IMR-90 (cell line): ENCODE measurements at regions of chr7 and their contacts with region 1.

Region 1: DNA sequence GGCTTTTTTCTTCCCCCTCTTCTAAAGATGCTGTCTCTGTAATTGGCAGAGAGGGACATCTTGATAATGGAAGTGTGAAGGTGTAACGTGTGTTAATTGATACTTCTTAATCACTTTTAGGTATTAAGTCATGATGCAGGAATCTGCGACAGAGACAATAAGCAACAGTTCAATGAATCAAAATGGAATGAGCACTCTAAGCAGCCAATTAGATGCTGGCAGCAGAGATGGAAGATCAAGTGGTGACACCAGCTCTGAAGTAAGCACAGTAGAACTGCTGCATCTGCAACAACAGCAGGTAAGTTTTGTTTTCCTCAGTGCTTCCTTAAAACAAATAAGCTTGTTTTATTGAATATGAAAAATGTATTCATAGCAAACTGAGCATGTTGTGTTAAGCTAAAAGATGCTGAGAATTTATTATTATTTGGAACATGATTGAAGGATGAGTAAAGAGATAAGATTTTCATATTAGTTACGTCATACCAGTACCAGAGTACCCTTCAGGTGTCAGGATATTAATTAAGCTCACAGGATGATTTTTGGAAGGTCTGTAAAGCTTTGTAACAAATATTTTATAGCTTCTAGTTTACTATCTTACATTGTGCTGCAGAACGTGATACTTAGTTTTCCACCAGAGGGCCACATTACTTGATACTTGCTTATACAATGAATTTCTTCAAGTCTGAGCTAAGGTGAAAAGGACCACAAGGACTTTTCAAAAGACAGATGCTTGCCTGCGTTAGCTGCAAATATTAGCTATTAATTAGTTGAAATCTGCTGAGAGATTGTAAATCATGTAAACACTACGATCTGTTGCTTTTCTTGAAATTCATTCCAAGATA is 12.0 kb downstream of the FOXP2 start:
- DNase-seq: peak; percentile 36
- ATAC-seq: peak; percentile 53; the same call in 1 of the 2 replicates
- H3K4me3 ChIP-seq: no peak overlapping the region
- H3K27ac ChIP-seq: no peak overlapping the region
- H3K4me1 ChIP-seq: no peaks in the 10 kb centered on the region
- H3K27me3 ChIP-seq: no peaks in the 10 kb centered on the region
- CTCF ChIP-seq: peak; percentile 43
- POLR2A ChIP-seq: no peak
- RAD21 ChIP-seq: peak; percentile 35; the same call in 1 of the 2 replicates

Region 2: DNA sequence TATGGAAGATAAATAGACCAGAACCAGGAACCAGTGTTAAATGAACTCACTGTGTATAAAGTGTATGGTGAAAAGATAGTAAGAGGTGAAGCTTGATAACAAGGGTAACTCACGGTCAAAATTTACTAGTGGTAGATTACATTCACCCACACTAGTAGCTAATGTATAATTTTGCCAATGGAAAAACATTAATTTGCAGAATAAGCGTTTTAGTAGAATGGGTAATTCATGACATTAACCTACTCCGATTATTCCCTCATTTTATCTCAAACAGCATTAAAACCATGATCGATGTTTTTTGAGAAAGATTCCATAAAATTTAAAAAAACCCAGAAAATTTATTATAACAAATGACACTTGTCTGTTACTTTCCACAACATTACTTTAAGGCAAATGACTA is 450.1 kb before region 1 on chr7:
- CTCF ChIA-PET with region 1: no interaction called
- POLR2A ChIA-PET with region 1: no interaction called
- dilution Hi-C with region 1: no loop called
- in situ Hi-C with region 1: no loop called
- intact Hi-C with region 1: no loop called
- DNase-seq: no peak
- ATAC-seq: no peak
- H3K4me3 ChIP-seq: no peak overlapping the region
- H3K27ac ChIP-seq: no peak overlapping the region
- H3K4me1 ChIP-seq: no peaks in the 10 kb centered on the region
- H3K27me3 ChIP-seq: no peaks in the 10 kb centered on the region
- CTCF ChIP-seq: no peak
- POLR2A ChIP-seq: no peak
- RAD21 ChIP-seq: no peak

Region 3: DNA sequence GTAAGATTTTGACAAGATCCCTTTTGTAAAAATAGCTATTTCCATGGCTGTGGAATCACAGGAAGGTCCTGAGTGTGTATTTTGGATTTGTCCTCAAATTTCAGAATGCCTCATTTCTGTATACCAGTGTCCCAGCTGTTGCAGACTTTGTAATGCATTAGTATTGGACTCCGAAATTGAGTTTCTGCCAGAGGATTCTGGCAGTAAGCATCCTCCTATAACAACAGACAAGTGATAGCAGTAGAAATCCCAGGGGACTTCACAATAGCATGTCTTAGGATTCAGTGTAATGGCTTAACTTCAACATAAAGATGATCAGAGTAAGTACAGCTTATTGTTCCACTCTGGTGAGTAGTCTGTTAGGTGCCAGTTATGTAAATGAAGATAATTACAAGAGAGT is 92.6 kb after region 1 on chr7:
- CTCF ChIA-PET with region 1: no interaction called
- POLR2A ChIA-PET with region 1: no interaction called
- dilution Hi-C with region 1: no loop called
- in situ Hi-C with region 1: no loop called
- intact Hi-C with region 1: no loop called
- DNase-seq: no peak
- ATAC-seq: no peak
- H3K4me3 ChIP-seq: no peak overlapping the region
- H3K27ac ChIP-seq: no peak overlapping the region
- H3K4me1 ChIP-seq: no peaks in the 10 kb centered on the region
- H3K27me3 ChIP-seq: no peaks in the 10 kb centered on the region
- CTCF ChIP-seq: no peak
- POLR2A ChIP-seq: no peak
- RAD21 ChIP-seq: no peak

Region 4: DNA sequence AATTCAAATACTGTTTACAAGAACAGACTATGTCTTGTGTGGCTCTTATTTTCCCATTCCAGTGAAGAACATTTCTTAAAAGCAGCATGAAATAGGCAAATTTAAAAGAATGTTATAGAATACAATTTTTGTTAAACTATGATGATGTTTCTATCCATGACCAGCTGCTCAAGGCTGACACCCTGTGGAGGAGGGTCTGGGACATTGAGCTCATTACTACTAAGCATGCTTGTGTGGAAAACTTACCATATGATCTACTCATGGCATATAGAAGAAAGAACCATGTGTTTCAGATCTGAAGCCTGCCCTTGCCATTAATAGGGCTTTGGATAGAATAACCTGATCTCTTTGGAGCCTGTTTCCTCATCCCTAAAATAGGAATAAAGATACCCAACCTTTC is 113.0 kb after region 1 on chr7:
- CTCF ChIA-PET with region 1: interaction called, 16 read pairs
- POLR2A ChIA-PET with region 1: no interaction called
- dilution Hi-C with region 1: no loop called
- in situ Hi-C with region 1: no loop called
- intact Hi-C with region 1: loop called (anchors 5 kb)
- DNase-seq: peak; percentile 35
- ATAC-seq: peak; percentile 72
- H3K4me3 ChIP-seq: no peak overlapping the region
- H3K27ac ChIP-seq: no peak overlapping the region
- H3K4me1 ChIP-seq: no peaks in the 10 kb centered on the region
- H3K27me3 ChIP-seq: no peaks in the 10 kb centered on the region
- CTCF ChIP-seq: peak; percentile 51
- POLR2A ChIP-seq: no peak
- RAD21 ChIP-seq: peak; percentile 44

Region 5: GRCh38 chr7:114663502-114663901 is 236.9 kb after region 1 on chr7:
- CTCF ChIA-PET with region 1: interaction called, 5 read pairs
- POLR2A ChIA-PET with region 1: no interaction called
- dilution Hi-C with region 1: no loop called
- in situ Hi-C with region 1: no loop called
- intact Hi-C with region 1: loop called (anchors 1 kb)
- DNase-seq: peak; percentile 34
- ATAC-seq: no peak
- H3K4me3 ChIP-seq: no peak overlapping the region
- H3K27ac ChIP-seq: no peak overlapping the region
- H3K4me1 ChIP-seq: no peaks in the 10 kb centered on the region
- H3K27me3 ChIP-seq: no peaks in the 10 kb centered on the region
- CTCF ChIP-seq: peak; percentile 37
- POLR2A ChIP-seq: no peak
- RAD21 ChIP-seq: peak; percentile 32; the same call in 1 of the 2 replicates